ENCODE measurements at regions of chr10 and their contacts with region 1.

Region 1: GRCh38 chr10:119103903-119104652 is at the start of gene DENND10:
- DNase-seq: no peak
- H3K4me3 ChIP-seq: peak within 1 kb of the TSS; percentile 81
- H3K27me3 ChIP-seq: no peaks in the 10 kb centered on the region
- CTCF ChIP-seq: no peak
- polyA plus RNA-seq, gene DENND10: 86.8 and 96.4 TPM in 2 replicates

Region 2: GRCh38 chr10:119041326-119041725 is 62.8 kb before region 1 on chr10:
- CTCF ChIA-PET with region 1: no interaction called
- POLR2A ChIA-PET with region 1: interaction called, 10 read pairs
- DNase-seq: no peak
- H3K4me3 ChIP-seq: no peak overlapping the region
- H3K27me3 ChIP-seq: no peaks in the 10 kb centered on the region
- CTCF ChIP-seq: no peak

Region 3: DNA sequence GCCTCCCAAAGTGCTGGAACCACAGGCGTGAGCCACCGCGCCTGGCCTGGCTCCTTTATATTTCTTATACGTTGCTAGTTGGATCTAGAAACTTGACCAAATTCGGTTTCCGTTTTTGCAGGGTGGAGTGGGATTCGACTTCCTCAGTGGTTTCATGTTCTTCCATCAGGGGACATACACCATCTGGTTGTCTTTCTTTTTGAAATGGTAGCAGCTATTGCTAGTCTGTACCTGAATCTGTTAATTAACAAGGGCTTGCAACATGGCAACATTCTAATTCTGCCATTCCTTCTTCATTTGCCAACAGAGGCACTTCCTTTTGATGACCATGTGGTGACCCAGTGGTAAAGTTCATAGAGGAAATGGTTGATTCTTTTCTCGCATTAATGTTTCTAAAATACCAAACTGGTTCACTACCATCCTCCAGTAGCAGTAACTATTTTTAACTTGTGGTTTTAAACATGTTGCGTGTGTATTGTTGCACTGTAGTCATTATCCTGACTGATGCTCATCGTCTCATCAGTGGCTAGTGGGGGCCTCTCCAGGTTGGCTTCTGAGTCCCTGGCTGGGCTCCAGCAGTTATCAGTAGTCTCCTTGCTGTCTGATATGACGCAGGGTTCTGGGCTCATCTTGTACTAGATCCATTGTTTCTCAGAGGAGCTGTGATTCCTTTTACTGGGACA is 279.2 kb after region 1 on chr10:
- CTCF ChIA-PET with region 1: no interaction called
- POLR2A ChIA-PET with region 1: no interaction called
- DNase-seq: no peak
- H3K4me3 ChIP-seq: no peak overlapping the region
- H3K27me3 ChIP-seq: no peaks in the 10 kb centered on the region
- CTCF ChIP-seq: no peak

Measured in BJ (cell line).